ENCODE measurements at regions of chr2 and their contacts with region 1.

Region 1: DNA sequence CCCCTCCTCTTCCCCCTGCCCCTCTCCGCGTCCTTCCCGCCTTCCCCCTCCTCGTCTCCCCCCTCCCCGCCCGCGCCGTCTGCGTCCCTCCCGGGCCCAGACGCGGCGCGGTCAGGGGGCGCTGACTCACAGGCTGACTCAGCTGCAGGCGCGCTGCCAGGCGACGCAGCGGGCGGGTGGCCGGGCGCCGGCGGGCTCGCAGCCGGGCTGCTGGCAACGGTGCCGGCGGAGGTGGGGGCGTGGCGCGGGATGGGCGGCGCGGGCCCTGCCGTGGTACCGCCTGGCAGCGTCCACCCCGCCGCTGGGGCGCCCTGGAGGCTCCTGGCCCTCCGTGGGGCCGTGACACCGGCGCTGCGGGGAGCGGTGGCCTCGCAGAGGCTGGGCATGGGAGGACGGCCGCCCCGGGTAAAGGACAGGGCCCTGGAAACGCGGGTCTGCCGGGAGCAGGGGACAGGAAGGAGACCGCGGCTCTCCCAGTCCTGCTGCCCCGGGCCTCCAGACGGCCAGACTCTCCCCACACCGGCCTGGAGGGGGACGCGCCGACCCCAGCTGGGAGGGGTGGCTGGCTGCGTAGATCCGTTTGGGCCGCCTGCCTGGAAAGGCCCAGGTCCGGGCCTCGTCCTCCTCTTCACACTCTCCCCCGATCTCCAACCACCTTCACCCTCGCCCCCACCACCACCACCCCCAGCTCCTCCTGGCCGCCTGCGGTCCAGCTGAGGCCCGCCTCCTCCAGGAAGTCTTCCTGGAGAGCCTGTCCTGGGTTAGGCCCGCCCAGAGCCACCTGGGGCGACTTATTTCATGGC is 10.0 kb upstream of the PROC start:
- DNase-seq: peak; percentile 96
- H3K4me3 ChIP-seq: peak overlapping the region; percentile 38 to 63 (median 57)
- H3K27ac ChIP-seq: peak overlapping the region; percentile 87 to 93 (median 90)
- H3K4me1 ChIP-seq: peaks cover 0 to 33% (median 25%) of the 10 kb centered on the region in 4 donors
- H3K27me3 ChIP-seq: no peaks in the 10 kb centered on the region
- CTCF ChIP-seq: no peak
- EP300 ChIP-seq: peak in 2 of 4 donors; percentile 21 to 71
- POLR2A ChIP-seq: no peak

Region 2: GRCh38 chr2:127064642-127065250 is 343.5 kb before region 1 on chr2:
- intact Hi-C with region 1: loop called (anchors 10 kb)
- DNase-seq: peak; percentile 97
- H3K4me3 ChIP-seq: peak overlapping the region in 1 of 4 donors; percentile 4
- H3K27ac ChIP-seq: peak overlapping the region; percentile 67 to 77 (median 75)
- H3K4me1 ChIP-seq: peaks cover 0 to 29% (median 22%) of the 10 kb centered on the region in 4 donors
- H3K27me3 ChIP-seq: no peaks in the 10 kb centered on the region
- CTCF ChIP-seq: no peak
- EP300 ChIP-seq: peak in 2 of 4 donors; percentile 25 to 87
- POLR2A ChIP-seq: no peak

Region 3: DNA sequence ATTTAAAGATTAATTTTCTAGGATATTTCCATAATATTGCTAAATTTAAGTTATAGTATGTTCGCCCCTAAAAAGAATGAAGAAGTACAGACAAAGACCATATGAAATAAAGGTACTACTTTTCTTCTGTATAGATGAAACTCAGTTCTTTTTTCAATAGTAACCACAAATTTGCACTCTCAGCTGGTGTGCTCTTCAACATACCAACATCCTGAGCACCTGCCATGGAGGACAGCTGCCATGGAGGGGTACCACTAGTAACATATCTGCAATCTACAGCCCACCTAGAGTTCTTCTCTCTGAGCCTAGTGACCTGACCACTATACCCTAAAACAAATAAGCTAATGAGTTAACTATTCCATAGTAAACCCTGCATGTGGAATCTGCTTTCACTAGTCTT is 77.5 kb before region 1 on chr2:
- intact Hi-C with region 1: no loop called
- DNase-seq: no peak
- H3K4me3 ChIP-seq: no peak overlapping the region
- H3K27ac ChIP-seq: no peak overlapping the region
- H3K4me1 ChIP-seq: no peaks in the 10 kb centered on the region
- H3K27me3 ChIP-seq: no peaks in the 10 kb centered on the region
- CTCF ChIP-seq: no peak
- EP300 ChIP-seq: no peak
- POLR2A ChIP-seq: no peak

Region 4: DNA sequence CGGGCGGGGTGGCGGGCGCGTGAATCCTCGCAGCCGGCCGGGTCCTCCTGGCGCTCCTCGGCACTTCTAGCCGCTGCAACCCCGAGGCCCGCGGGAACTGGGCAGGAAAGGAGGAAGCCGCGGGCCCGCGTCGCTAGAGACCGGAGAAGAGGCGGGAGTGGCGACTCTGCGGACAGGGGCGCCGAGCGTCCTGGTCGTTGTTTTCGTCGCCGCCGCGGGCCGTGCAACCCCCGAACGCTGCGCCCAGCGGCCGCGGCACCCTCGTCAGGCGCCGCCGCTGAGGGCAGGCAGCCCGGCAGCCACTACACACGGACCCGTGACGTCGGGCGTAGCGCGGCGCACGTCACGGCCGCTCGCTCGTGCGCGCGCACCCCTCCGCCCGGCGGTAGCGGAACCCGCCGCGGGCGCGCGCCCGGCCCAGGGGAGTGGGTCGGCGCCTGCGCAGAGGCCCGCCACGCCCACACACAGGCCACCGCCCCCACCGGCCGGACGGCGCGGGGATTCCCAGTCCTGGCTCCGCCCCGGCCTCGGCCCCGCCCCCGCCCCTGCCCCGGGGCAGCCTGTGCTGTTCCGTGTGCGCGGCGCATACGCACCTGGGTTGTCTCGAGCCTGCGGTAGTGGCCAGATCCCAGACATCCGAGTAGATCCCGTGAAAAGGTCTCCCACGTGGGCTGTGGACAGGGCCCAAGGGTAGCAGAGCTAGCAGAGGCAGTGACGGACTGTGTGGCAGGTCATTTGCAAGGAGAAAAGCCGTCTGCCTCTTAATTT is 20.4 kb before region 1 on chr2 and contains the start of gene MAP3K2:
- intact Hi-C with region 1: loop called (anchors 1 kb)
- DNase-seq: peak; percentile 97
- H3K4me3 ChIP-seq: peak within 1 kb of the TSS; percentile 81 to 98 (median 90)
- H3K27ac ChIP-seq: peak within 1 kb of the TSS; percentile 97 to 100 (median 99)
- H3K4me1 ChIP-seq: peaks cover 0 to 50% (median 30%) of the 10 kb centered on the region in 4 donors
- H3K27me3 ChIP-seq: no peaks in the 10 kb centered on the region
- CTCF ChIP-seq: no peak
- EP300 ChIP-seq: peak in 2 of 4 donors; percentile 55 to 95
- POLR2A ChIP-seq: peak; percentile 66 to 71
- total RNA-seq, gene MAP3K2: 39.9 to 52.2 (median 47.7) TPM

Region 5: GRCh38 chr2:127486247-127487058 is 78.2 kb after region 1 on chr2:
- intact Hi-C with region 1: no loop called
- DNase-seq: no peak
- H3K4me3 ChIP-seq: no peak overlapping the region
- H3K27ac ChIP-seq: no peak overlapping the region
- H3K4me1 ChIP-seq: no peaks in the 10 kb centered on the region
- H3K27me3 ChIP-seq: no peaks in the 10 kb centered on the region
- CTCF ChIP-seq: no peak
- EP300 ChIP-seq: no peak
- POLR2A ChIP-seq: no peak